ENCODE measurements at regions of chr15 and their contacts with region 1.

Region 1: GRCh38 chr15:42548253-42549031 is at the starts of genes HAUS2 and LRRC57:
- DNase-seq: peak; percentile 85
- H3K4me3 ChIP-seq: peak within 1 kb of the TSS; percentile 75 to 77
- H3K27ac ChIP-seq: peak within 1 kb of the TSS; percentile 92 to 94
- H3K4me1 ChIP-seq: no peaks in the 10 kb centered on the region
- H3K27me3 ChIP-seq: no peaks in the 10 kb centered on the region
- CTCF ChIP-seq: peak in 1 of 4 experiments; percentile 23
- POLR2A ChIP-seq: peak; percentile 89
- total RNA-seq, gene HAUS2: 27.5 to 41.9 TPM
- total RNA-seq, gene LRRC57: 9.8 to 21.8 TPM

Region 2: DNA sequence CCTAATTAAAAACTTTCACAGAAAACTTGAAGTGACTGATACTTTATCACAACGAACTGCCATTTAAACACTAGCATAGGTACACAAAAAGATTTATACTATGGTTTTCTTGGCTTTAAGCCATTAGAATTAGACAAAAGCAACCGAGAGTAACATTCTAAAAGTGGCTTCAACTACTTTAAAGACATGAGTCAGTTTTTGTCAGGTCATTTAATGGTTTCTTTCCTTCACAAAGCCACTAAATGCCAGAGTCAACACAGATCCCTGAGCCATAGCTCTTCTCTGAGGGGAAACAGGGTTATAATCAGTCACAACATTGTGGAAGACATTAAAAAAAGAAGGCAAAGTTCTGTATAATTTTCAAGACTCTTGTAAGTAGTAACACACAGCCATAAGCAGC is 134.5 kb before region 1 on chr15:
- intact Hi-C with region 1: no loop called
- DNase-seq: no peak
- H3K4me3 ChIP-seq: no peak overlapping the region
- H3K27ac ChIP-seq: no peak overlapping the region
- H3K4me1 ChIP-seq: no peaks in the 10 kb centered on the region
- H3K27me3 ChIP-seq: no peaks in the 10 kb centered on the region
- CTCF ChIP-seq: no peak
- POLR2A ChIP-seq: no peak

Region 3: GRCh38 chr15:42495361-42496212 is 52.9 kb before region 1 on chr15 and contains the start of gene SNAP23:
- intact Hi-C with region 1: loop called (anchors 2 kb)
- DNase-seq: peak; percentile 96
- H3K4me3 ChIP-seq: peak within 1 kb of the TSS; percentile 62 to 82
- H3K27ac ChIP-seq: peak within 1 kb of the TSS; percentile 93 to 94
- H3K4me1 ChIP-seq: peaks cover 2% of the 10 kb centered on the region
- H3K27me3 ChIP-seq: no peaks in the 10 kb centered on the region
- CTCF ChIP-seq: peak in 1 of 4 experiments; percentile 22
- POLR2A ChIP-seq: peak; percentile 98
- total RNA-seq, gene SNAP23: 86.1 to 93.9 TPM

Region 4: GRCh38 chr15:42650208-42651066 is 102.0 kb after region 1 on chr15:
- intact Hi-C with region 1: loop called (anchors 5 kb)
- DNase-seq: peak; percentile 81
- H3K4me3 ChIP-seq: no peak overlapping the region
- H3K27ac ChIP-seq: no peak overlapping the region
- H3K4me1 ChIP-seq: no peaks in the 10 kb centered on the region
- H3K27me3 ChIP-seq: no peaks in the 10 kb centered on the region
- CTCF ChIP-seq: peak; percentile 35 to 75 (median 70)
- POLR2A ChIP-seq: no peak